Left ventricle myocardium superior (tissue), 1 donor: ENCODE measurements at regions of chr4 and their contacts with region 1.

Region 1: DNA sequence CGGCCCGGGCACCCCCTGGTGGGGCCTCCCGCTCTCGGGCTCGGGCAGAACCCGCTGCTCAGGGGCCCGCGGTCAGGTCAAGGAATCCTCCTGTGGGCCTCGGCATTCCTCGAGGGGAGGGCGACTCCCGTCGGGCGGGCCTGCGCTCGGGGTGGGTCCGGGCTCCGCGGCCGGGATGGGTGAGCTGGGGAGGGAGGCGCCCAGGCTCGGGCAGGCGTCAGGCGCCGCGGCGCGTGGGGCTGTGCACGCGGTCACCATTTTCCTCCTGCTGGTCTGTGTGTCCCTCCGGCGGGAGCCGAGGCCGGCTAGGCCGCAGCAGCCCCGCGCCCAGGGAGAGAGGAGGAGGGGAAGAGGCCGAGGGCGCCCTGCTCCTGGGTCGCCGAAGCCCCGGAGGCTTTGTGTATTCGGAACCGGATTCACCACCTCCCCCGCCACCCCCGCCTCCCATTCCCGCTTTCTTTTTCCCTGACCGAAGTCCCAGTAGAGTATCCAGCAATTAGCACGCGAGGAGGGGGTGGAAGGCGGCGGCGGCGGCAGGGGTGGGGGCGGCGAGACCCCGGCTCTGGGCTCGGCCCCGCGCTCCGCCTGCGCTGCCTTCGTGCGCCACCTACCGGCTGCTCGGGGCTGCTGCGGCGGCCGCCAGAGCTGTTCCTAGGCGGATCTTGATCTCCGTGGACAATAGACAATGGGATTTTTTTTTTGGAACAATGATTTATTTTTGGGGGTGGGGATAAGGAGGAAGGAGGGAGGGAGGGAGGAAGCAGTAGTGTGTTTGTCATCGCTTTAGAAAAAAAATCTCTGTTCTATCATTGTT is 99.0 kb upstream of the MAML3 start:
- DNase-seq: peak; percentile 86
- ATAC-seq: peak; percentile 92

Region 2: GRCh38 chr4:139734875-139735380 is 518.0 kb before region 1 on chr4:
- intact Hi-C with region 1: loop called (anchors 5 kb)
- DNase-seq: peak; percentile 95
- ATAC-seq: peak; percentile 96

Region 3: GRCh38 chr4:140012688-140013486 is 240.1 kb before region 1 on chr4:
- intact Hi-C with region 1: loop called (anchors 10 kb)
- DNase-seq: peak; percentile 43
- ATAC-seq: peak; percentile 90